WTC11 (cell line): ENCODE measurements at regions of chr13 and their contacts with region 1.

Region 1: DNA sequence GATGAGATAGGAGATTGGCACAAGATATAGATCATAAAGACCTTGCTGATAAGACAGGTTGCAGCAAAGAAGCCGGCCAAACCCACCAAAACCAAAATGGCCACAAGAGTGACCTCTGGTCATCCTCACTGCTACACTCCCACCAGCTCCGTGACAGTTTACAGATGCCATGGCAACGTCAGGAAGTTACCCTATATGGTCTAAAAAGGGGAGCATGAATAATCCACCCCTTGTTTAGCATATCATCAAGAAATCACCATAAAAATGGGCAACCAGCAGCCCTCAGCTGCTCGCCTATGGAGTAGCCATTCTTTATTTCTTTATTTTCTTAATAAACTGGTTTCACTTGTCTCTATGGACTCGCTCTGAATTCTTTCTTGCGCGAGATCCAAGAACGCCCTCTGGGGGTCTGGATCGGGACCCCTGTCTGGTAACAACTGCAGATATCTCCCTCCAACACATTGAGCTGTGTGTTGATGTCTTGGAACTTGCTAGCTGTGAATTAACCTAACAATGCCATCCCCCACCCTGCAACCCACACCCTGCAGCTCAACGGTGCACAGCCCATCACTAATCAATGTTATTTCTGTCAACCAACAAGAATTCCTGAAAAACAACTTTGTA is 27.1 kb upstream of the GRTP1 start:
- DNase-seq: peak; percentile 60
- ATAC-seq: peak; percentile 70
- H3K4me3 Mint-ChIP-seq: no peak overlapping the region
- H3K27ac Mint-ChIP-seq: peak overlapping the region; percentile 80
- H3K4me1 Mint-ChIP-seq: peaks cover 25% of the 10 kb centered on the region
- H3K27me3 Mint-ChIP-seq: peaks cover 13% of the 10 kb centered on the region
- CTCF ChIP-seq: no peak

Region 2: DNA sequence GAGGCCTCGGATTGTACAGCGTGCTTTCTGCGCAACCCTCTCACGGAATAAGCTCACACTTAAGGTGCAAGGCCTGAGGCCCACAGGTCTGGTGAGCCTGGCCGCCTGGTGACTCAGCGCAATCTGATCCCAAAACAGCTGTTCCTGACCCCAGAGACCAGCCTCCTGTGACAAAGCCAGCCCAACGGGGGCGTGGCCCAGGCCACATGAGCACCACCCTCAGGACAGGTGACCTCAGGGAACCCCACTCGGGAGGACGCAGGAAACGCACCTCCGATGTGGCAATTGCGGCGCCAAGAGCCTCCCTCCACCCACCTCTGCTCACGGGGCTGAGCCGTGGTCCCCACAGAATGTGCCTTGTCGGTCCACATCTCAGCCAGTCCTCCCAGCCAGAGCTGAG is 53.4 kb before region 1 on chr13:
- CTCF ChIA-PET with region 1: interaction called, 11 read pairs
- POLR2A ChIA-PET with region 1: no interaction called
- DNase-seq: peak; percentile 53
- ATAC-seq: peak; percentile 89
- H3K4me3 Mint-ChIP-seq: no peak overlapping the region
- H3K27ac Mint-ChIP-seq: peak overlapping the region; percentile 86; the same call in 1 of the 2 replicates
- H3K4me1 Mint-ChIP-seq: peaks cover 7% of the 10 kb centered on the region
- H3K27me3 Mint-ChIP-seq: no peaks in the 10 kb centered on the region
- CTCF ChIP-seq: no peak

Region 3: DNA sequence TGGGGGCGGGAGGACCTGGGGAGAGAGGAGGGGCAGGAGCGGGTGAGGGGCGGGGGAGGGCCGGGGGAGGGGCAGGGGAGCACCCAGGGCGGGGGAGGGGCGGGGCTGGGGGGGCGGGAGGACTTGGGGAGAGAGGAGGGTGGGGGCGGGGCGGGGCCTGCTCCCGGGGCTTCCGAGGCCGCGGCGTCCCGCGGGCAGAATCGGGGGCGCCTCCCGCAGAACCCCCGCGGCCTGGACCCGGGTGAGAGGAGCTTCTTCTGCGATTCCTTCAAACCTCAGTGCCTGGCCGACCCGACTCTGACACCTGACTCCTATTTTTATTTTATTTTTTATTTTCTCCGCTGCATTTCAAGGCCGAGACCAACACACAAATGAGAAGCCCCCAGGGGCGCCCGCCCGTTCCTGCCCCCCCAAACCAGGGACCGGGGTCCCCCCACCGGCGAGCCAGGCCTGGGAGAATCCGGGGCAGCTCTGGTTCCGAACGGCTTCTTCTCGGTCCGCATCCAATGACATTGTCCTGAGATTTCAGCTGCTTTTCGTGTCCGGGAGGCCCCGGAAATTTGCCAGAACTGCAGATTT is 26.6 kb before region 1 on chr13:
- CTCF ChIA-PET with region 1: interaction called, 34 read pairs
- POLR2A ChIA-PET with region 1: interaction called, 4 read pairs
- DNase-seq: peak; percentile 39
- ATAC-seq: no peak
- H3K4me3 Mint-ChIP-seq: no peak overlapping the region
- H3K27ac Mint-ChIP-seq: no peak overlapping the region
- H3K4me1 Mint-ChIP-seq: peaks cover 17% of the 10 kb centered on the region
- H3K27me3 Mint-ChIP-seq: no peaks in the 10 kb centered on the region
- CTCF ChIP-seq: no peak

Region 4: GRCh38 chr13:113374511-113375175 is 16.3 kb before region 1 on chr13:
- CTCF ChIA-PET with region 1: interaction called, 29 read pairs
- POLR2A ChIA-PET with region 1: interaction called, 3 read pairs
- DNase-seq: no peak
- ATAC-seq: no peak
- H3K4me3 Mint-ChIP-seq: no peak overlapping the region
- H3K27ac Mint-ChIP-seq: peak overlapping the region; percentile 68
- H3K4me1 Mint-ChIP-seq: peaks cover 42% of the 10 kb centered on the region
- H3K27me3 Mint-ChIP-seq: peaks cover 15% of the 10 kb centered on the region
- CTCF ChIP-seq: no peak